Caco-2 (cell line): ENCODE measurements at regions of chr14 and their contacts with region 1.

Region 1: DNA sequence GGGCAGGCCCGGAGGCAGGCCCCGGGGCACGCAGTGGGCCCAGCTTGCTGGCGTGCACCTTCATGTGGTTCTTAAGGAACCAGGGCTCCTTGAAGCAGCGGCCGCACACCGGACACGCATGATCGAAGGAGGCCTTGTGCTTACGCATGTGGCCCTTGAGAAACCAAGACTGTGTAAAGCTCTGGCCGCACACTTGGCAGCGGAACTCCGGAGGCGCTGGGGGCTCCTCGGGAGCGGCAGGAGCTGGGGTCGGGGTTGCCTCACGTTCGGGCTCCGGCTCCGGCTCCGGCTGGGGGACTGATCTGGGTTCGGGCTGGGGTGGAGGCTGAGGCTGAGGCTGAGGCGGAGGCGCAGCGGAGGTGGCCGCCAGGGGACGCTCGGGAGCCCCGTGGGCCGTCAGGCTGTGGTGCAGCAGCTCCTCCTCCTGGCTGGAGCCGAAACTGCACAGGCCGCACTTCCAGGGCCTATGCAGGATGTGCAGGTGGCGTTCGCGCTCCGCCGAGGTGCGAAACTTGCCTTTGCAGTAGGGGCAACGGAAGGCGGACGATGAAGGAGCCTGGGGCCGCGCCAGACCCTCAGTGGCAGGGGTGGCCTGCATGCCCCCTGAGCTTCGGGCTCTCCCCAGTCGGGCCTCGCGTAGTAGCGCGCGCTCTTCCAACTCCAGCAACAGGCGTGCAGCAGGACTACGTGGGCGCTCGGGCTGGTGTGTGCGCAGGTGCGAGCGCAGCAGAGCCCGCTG is 6.0 kb downstream of the ZNF219 start:
- DNase-seq: peak in 1 of 2 experiments; percentile 86
- H3K4me3 ChIP-seq: no peak overlapping the region
- H3K4me3 Mint-ChIP-seq: no peak overlapping the region
- H3K27ac Mint-ChIP-seq: no peak overlapping the region
- H3K4me1 ChIP-seq: no peaks in the 10 kb centered on the region; the same call in 1 of the 2 replicates
- H3K4me1 Mint-ChIP-seq: peaks cover 15% of the 10 kb centered on the region
- H3K27me3 ChIP-seq: no peaks in the 10 kb centered on the region
- H3K27me3 Mint-ChIP-seq: no peaks in the 10 kb centered on the region
- CTCF ChIP-seq: peak; percentile 99

Region 2: DNA sequence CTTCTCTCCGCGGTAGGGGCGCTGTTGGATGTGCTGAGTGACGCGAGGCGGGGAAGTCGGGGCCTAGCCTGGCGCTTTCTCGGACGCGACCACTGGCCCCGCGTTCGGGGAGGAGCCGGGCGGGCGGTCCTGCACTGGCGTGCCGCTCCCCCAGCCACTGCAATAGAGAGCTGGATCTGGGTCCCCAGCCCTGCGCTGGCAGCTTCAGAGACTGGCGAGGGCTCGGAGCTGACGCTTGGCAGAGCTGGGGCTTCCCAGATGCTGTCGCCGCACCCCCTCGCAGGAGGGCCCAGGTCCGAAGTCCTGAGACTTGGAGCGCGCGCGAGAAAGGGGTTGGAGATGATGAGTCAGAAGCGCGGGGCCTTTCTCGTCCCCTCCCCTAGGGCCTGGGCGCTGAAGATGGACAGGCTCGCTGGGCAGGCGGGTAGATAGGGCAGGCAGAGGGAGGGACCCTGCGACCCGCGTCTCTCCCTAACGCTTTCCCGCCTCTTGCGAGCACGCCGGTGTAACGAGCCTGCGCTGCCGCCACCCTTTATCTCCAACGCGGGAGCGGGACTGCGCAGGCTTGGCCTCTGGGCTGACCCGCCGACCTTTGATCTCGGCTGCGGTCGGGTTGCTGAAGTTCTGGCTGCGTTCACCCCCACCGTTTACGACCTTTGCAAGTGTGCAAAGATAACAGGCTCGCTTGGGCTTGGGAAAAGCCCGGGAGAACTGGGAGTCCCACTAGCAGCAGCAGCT is 11.4 kb after region 1 on chr14:
- CTCF ChIA-PET with region 1: interaction called, 43 read pairs
- POLR2A ChIA-PET with region 1: interaction called, 12 read pairs
- intact Hi-C with region 1: loop called (anchors 1 kb)
- DNase-seq: peak; percentile 95 to 97
- H3K4me3 ChIP-seq: peak overlapping the region; percentile 72
- H3K4me3 Mint-ChIP-seq: peak overlapping the region; percentile 87
- H3K27ac Mint-ChIP-seq: peak overlapping the region; percentile 85
- H3K4me1 ChIP-seq: peaks cover 46% of the 10 kb centered on the region
- H3K4me1 Mint-ChIP-seq: peaks cover 39% of the 10 kb centered on the region
- H3K27me3 ChIP-seq: no peaks in the 10 kb centered on the region
- H3K27me3 Mint-ChIP-seq: no peaks in the 10 kb centered on the region
- CTCF ChIP-seq: peak; percentile 59 to 85

Region 3: GRCh38 chr14:21768116-21768874 is 675.9 kb after region 1 on chr14:
- CTCF ChIA-PET with region 1: no interaction called
- POLR2A ChIA-PET with region 1: no interaction called
- intact Hi-C with region 1: no loop called
- DNase-seq: peak in 1 of 2 experiments; percentile 22
- H3K4me3 ChIP-seq: no peak overlapping the region
- H3K4me3 Mint-ChIP-seq: no peak overlapping the region
- H3K27ac Mint-ChIP-seq: no peak overlapping the region
- H3K4me1 ChIP-seq: 0 out of 2 replicates have a peak, but pooled peaks cover 6% of the 10 kb centered on the region
- H3K4me1 Mint-ChIP-seq: peaks cover 7% of the 10 kb centered on the region
- H3K27me3 ChIP-seq: no peaks in the 10 kb centered on the region
- H3K27me3 Mint-ChIP-seq: peaks cover 5% of the 10 kb centered on the region
- CTCF ChIP-seq: peak; percentile 52 to 58